Activated T-helper 2 cell treated with anti-CD3 and anti-CD28 coated beads, Interferon-gamma antibody, Interleukin-2, Interleukin-4, amounts not matched to agents 10 μg/mL and 5 μg/mL and 100 μg/mL, durations not matched to agents 14 hours and 24 hours and 36 hours (primary cell): ENCODE measurements at regions of chr4 and their contacts with region 1.

Region 1: GRCh38 chr4:105912633-105913032 is 17.4 kb downstream of the NPNT start:
- DNase-seq: no peak
- H3K4me3 Mint-ChIP-seq: no peak overlapping the region
- H3K27ac Mint-ChIP-seq: no peak overlapping the region
- H3K4me1 Mint-ChIP-seq: no peaks in the 10 kb centered on the region
- H3K27me3 Mint-ChIP-seq: no peaks in the 10 kb centered on the region

Region 2: GRCh38 chr4:105870963-105871362 is 41.7 kb before region 1 on chr4:
- intact Hi-C with region 1: loop called (anchors 2 kb)
- DNase-seq: no peak
- H3K4me3 Mint-ChIP-seq: no peak overlapping the region
- H3K27ac Mint-ChIP-seq: no peak overlapping the region
- H3K4me1 Mint-ChIP-seq: no peaks in the 10 kb centered on the region
- H3K27me3 Mint-ChIP-seq: no peaks in the 10 kb centered on the region

Region 3: DNA sequence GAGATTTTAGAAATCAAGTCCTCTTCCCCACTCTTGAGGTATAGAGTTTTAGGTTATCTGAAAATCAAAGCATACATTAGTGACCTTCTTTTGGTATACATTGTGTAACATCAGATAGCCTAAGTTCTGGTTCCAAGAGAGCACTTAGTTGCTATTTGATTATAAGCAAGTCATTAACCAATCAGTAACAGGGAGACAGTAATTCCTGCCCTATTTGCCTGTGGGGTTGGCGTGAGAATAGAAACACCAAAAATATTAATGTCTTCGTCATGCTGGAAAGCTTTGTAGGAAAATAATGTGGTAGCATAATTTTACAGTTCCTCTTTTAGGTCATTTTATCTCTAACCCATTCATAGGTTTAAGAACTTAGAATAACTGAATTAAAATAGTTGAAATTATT is 20.4 kb after region 1 on chr4:
- intact Hi-C with region 1: no loop called
- DNase-seq: no peak
- H3K4me3 Mint-ChIP-seq: no peak overlapping the region
- H3K27ac Mint-ChIP-seq: no peak overlapping the region
- H3K4me1 Mint-ChIP-seq: no peaks in the 10 kb centered on the region
- H3K27me3 Mint-ChIP-seq: no peaks in the 10 kb centered on the region

Region 4: GRCh38 chr4:105944540-105944939 is 31.9 kb after region 1 on chr4:
- intact Hi-C with region 1: no loop called
- DNase-seq: no peak
- H3K4me3 Mint-ChIP-seq: no peak overlapping the region
- H3K27ac Mint-ChIP-seq: no peak overlapping the region
- H3K4me1 Mint-ChIP-seq: no peaks in the 10 kb centered on the region
- H3K27me3 Mint-ChIP-seq: peaks cover 2% of the 10 kb centered on the region